ENCODE measurements at regions of chr3 and their contacts with region 1.

Region 1: DNA sequence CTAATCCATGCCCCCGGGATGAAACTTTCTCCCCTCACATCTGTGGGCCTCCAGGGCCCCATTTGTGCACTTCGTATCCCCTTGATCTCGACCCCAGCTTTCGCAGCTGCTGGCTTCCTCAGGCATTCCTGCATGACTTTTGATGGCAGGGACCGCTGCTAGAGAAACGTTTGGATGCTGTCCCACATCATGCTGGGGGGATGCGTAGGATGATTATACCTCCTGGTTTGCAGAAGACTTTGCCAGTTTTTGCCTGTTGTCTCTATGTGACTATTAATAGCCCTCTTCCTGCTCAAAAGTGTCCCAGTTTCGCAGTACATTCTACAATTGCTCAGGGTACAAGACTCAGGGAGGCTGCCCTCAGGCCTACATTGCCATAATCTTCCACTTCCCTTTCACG is 10.4 kb upstream of the KCNAB1 start:
- DNase-seq: no peak
- ATAC-seq: no peak
- H3K4me3 ChIP-seq: no peak overlapping the region
- H3K27ac ChIP-seq: no peak overlapping the region
- H3K4me1 ChIP-seq: no peaks in the 10 kb centered on the region
- CTCF ChIP-seq: no peak
- EP300 ChIP-seq: no peak
- POLR2A ChIP-seq: no peak
- RAD21 ChIP-seq: no peak

Region 2: GRCh38 chr3:155690921-155691320 is 419.1 kb before region 1 on chr3:
- CTCF ChIA-PET with region 1: no interaction called
- POLR2A ChIA-PET with region 1: no interaction called
- DNase-seq: no peak
- ATAC-seq: no peak
- H3K4me3 ChIP-seq: no peak overlapping the region
- H3K27ac ChIP-seq: no peak overlapping the region
- H3K4me1 ChIP-seq: no peaks in the 10 kb centered on the region
- CTCF ChIP-seq: no peak
- EP300 ChIP-seq: no peak
- POLR2A ChIP-seq: no peak
- RAD21 ChIP-seq: no peak

Region 3: DNA sequence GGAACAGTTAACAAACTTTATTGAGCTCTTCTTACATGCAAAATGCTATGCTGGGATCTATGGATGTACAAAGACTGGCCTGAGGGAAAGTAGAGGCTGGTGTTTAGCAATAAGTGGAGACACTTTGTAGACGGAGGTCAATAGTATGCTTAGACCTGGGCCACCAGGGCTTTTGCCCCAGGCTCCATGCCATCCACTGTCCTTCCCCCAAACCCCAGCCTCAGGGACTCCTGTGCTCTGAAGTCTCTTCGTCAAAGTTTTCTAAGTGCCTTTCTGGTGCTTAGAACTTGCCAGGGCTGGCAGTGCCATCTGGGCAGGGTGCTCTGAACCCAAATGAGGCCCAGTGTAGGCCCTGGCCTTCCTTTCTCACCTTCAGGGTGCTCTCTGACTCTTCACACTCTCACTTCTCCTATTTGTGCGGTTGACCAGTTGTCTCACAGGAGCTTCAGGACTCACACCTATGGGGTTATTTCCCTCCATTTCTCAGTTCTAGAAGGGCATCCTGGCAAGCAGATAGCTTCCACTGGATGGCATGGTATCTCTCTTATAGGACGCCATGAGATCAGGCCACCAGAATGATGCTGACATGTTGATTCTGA is 11.5 kb before region 1 on chr3:
- CTCF ChIA-PET with region 1: interaction called, 10 read pairs
- POLR2A ChIA-PET with region 1: no interaction called
- DNase-seq: no peak
- ATAC-seq: no peak
- H3K4me3 ChIP-seq: no peak overlapping the region
- H3K27ac ChIP-seq: no peak overlapping the region
- H3K4me1 ChIP-seq: no peaks in the 10 kb centered on the region
- CTCF ChIP-seq: no peak
- EP300 ChIP-seq: no peak
- POLR2A ChIP-seq: no peak
- RAD21 ChIP-seq: no peak

Region 4: DNA sequence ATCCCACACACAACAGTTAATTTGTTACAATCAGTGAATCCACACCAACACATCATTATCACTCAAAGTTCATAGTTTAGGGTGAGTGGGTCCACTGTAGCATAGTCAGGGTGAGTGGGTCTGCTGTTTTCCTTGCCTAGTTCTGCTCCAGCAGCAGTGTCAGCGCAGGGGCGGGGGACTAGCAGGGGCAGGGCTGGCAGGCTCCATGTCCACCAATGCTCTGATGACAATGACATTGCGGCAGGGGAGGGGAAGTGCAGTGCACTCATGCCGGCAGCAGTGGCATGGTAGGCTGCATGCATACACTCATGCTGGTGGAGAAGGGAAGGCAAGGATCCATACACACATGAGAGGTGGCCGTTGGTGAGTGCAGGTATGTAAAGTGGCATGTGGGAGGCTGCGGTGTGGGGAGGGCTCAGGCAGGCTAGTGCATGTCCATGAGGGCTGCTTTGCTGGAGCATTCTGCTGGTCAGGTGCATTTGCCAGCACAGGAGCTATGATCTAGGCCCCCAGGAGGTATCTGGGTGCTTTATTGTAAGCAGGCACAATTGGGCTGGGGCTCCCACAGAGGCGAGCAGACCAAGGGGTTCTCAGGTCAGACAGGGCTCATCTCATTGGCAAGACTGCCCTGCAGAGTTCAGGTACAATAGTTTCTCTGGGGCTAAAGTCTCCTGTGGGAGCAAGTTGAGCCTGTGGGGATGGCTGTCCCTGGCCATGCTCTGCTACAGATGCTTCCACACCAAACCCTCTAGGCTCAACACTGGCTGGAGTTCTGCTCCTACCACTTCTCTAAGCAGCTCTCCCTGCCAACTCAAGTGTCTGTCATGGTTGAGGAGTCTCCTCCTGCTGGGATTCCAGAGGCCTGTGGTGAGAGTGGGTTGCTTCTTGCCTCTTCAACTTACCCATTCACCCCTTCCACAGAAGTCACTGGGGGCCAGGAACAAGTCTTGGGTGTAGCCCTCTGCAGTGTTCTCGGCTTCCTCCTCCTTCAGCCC is 91.7 kb after region 1 on chr3:
- CTCF ChIA-PET with region 1: no interaction called
- POLR2A ChIA-PET with region 1: no interaction called
- DNase-seq: no peak
- ATAC-seq: no peak
- H3K4me3 ChIP-seq: no peak overlapping the region
- H3K27ac ChIP-seq: no peak overlapping the region
- H3K4me1 ChIP-seq: no peaks in the 10 kb centered on the region
- CTCF ChIP-seq: no peak
- EP300 ChIP-seq: no peak
- POLR2A ChIP-seq: no peak
- RAD21 ChIP-seq: no peak

Region 5: GRCh38 chr3:156273111-156273694 is 163.2 kb after region 1 on chr3:
- CTCF ChIA-PET with region 1: no interaction called
- POLR2A ChIA-PET with region 1: no interaction called
- DNase-seq: no peak
- ATAC-seq: no peak
- H3K4me3 ChIP-seq: no peak overlapping the region
- H3K27ac ChIP-seq: no peak overlapping the region
- H3K4me1 ChIP-seq: no peaks in the 10 kb centered on the region
- CTCF ChIP-seq: no peak
- EP300 ChIP-seq: no peak
- POLR2A ChIP-seq: no peak
- RAD21 ChIP-seq: no peak

Measured in A549 (cell line).